GM12878 (cell line): ENCODE measurements at regions of chr19 and their contacts with region 1.

Region 1: DNA sequence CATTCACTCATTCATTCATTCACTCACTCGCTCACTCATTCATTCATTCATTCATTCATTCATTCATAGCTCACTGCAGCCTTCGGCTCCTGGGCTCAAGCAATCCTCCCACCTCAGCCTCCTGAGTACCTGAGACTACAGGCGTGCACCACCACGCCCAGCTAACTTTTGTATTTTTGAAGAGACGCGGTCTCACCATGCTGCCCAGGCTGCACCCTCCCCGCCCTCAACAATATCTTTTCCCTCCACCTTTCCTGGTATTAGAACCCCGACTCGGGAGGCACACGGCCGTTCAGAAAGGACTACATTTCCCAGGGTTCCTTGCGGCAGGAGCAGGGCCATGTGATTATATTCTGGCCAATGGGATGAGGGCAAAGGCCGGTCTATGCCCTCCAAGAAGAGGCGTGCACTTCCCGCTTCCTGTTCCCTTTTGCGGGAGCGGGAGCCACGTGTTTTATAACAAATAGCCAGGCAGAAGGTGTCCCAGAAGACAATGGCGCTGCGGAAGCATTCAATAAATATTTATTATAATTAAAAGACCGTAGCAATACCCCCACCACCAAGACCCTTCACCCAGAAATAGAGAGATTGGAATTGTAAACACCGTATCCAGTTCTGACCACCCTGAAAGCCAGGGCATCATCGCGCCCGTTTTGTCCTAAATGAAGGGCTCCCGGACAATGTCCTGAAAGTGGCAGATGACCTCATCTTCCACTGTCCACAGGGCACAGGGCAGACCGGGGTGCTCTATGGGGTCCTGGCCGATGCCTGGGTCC is 15.9 kb downstream of the TICAM1 start:
- DNase-seq: peak; percentile 48
- ATAC-seq: peak; percentile 82
- H3K4me3 ChIP-seq: no peak overlapping the region
- H3K27ac ChIP-seq: no peak overlapping the region
- H3K4me1 ChIP-seq: peaks cover 14% of the 10 kb centered on the region
- H3K27me3 ChIP-seq: no peaks in the 10 kb centered on the region
- CTCF ChIP-seq: no peak
- EP300 ChIP-seq: no peak
- POLR2A ChIP-seq: no peak; the same call in 1 of the 2 replicates
- RAD21 ChIP-seq: no peak

Region 2: GRCh38 chr19:4791170-4792018 is 24.2 kb before region 1 on chr19 and contains the start of gene FEM1A:
- CTCF ChIA-PET with region 1: interaction called, 17 read pairs
- POLR2A ChIA-PET with region 1: no interaction called
- RAD21 ChIA-PET with region 1: interaction called, 9 read pairs
- SMC1A ChIA-PET with region 1: interaction called, 15 read pairs
- in situ Hi-C with region 1: no loop called
- intact Hi-C with region 1: no loop called
- DNase-seq: peak; percentile 100
- ATAC-seq: peak; percentile 98
- H3K4me3 ChIP-seq: peak within 1 kb of the TSS; percentile 76
- H3K27ac ChIP-seq: peak within 1 kb of the TSS; percentile 93
- H3K4me1 ChIP-seq: peaks cover 22% of the 10 kb centered on the region
- H3K27me3 ChIP-seq: no peaks in the 10 kb centered on the region
- CTCF ChIP-seq: peak; percentile 98 to 99 (median 99); a peak in 5 of 6 replicates
- EP300 ChIP-seq: no peak
- POLR2A ChIP-seq: peak; percentile 89
- RAD21 ChIP-seq: peak; percentile 72
- polyA plus RNA-seq, gene FEM1A: 0.27 to 0.31 TPM

Region 3: GRCh38 chr19:4839186-4839585 is 23.6 kb after region 1 on chr19:
- CTCF ChIA-PET with region 1: interaction called, 30 read pairs
- POLR2A ChIA-PET with region 1: interaction called, 3 read pairs
- RAD21 ChIA-PET with region 1: interaction called, 4 read pairs
- SMC1A ChIA-PET with region 1: interaction called, 176 read pairs
- in situ Hi-C with region 1: no loop called
- intact Hi-C with region 1: no loop called
- DNase-seq: no peak
- ATAC-seq: no peak
- H3K4me3 ChIP-seq: no peak overlapping the region
- H3K27ac ChIP-seq: no peak overlapping the region
- H3K4me1 ChIP-seq: peaks cover 28% of the 10 kb centered on the region
- H3K27me3 ChIP-seq: no peaks in the 10 kb centered on the region
- CTCF ChIP-seq: no peak
- EP300 ChIP-seq: no peak
- POLR2A ChIP-seq: no peak
- RAD21 ChIP-seq: no peak

Region 4: GRCh38 chr19:4851551-4852290 is 36.1 kb after region 1 on chr19:
- CTCF ChIA-PET with region 1: interaction called, 346 read pairs
- POLR2A ChIA-PET with region 1: interaction called, 10 read pairs
- RAD21 ChIA-PET with region 1: interaction called, 158 read pairs
- SMC1A ChIA-PET with region 1: interaction called, 176 read pairs
- in situ Hi-C with region 1: no loop called
- intact Hi-C with region 1: no loop called
- DNase-seq: no peak
- ATAC-seq: peak; percentile 96
- H3K4me3 ChIP-seq: no peak overlapping the region
- H3K27ac ChIP-seq: no peak overlapping the region; the same call in 1 of the 2 replicates
- H3K4me1 ChIP-seq: peaks cover 28% of the 10 kb centered on the region
- H3K27me3 ChIP-seq: no peaks in the 10 kb centered on the region
- CTCF ChIP-seq: peak; percentile 88 to 92 (median 88)
- EP300 ChIP-seq: no peak
- POLR2A ChIP-seq: no peak; the same call in 1 of the 2 replicates
- RAD21 ChIP-seq: peak; percentile 84

Region 5: GRCh38 chr19:4909897-4910593 is 94.4 kb after region 1 on chr19:
- CTCF ChIA-PET with region 1: interaction called, 310 read pairs
- POLR2A ChIA-PET with region 1: interaction called, 8 read pairs
- RAD21 ChIA-PET with region 1: interaction called, 176 read pairs
- SMC1A ChIA-PET with region 1: interaction called, 94 read pairs
- in situ Hi-C with region 1: no loop called
- intact Hi-C with region 1: no loop called
- DNase-seq: peak; percentile 51
- ATAC-seq: peak; percentile 90
- H3K4me3 ChIP-seq: peak overlapping the region; percentile 99
- H3K27ac ChIP-seq: peak overlapping the region; percentile 78
- H3K4me1 ChIP-seq: peaks cover 29% of the 10 kb centered on the region
- H3K27me3 ChIP-seq: no peaks in the 10 kb centered on the region
- CTCF ChIP-seq: no peak
- EP300 ChIP-seq: no peak
- POLR2A ChIP-seq: peak; percentile 56; the same call in 1 of the 2 replicates
- RAD21 ChIP-seq: no peak

Region 6: DNA sequence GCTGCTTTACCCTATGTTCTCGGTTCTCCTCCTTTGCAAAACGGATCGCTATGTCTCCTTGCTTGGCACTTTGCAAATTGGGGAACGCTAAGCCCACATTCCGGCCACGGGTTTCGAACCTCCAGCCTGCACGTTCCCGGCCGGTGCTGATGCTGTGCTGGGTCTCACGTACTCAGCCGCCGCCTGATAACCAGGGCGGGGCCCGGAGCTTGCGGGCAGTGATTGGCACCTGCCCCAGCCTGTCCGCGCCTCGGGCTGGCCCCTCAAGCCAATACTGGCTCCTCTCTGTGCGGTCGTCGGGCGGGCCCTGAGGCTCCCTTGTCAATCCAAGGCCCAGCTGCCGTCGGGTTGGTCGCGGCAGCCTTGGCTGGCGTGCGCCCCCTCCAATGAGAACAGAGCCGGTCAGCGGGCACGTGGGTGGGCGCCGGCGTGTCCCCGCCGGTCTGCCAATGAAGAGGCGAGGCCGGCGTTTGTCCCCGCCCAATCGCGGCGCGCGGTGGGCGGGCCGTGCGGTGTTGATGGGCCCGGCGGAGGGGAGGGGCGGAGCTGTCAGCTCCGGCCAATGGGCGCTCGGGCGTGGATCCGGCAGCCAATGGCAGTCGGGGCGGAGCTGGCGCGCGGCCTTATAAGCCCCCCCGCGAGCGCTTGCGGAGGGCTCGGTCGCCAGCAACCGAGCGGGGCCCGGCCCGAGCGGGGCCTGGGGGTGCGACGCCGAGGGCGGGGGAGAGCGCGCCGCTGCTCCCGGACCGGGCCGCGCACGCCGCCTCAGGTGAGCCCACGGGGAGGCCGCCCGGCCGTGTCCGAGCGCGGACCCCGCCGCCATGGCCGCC is 153.1 kb after region 1 on chr19 and contains the start of gene KDM4B:
- CTCF ChIA-PET with region 1: interaction called, 15 read pairs
- POLR2A ChIA-PET with region 1: no interaction called
- RAD21 ChIA-PET with region 1: interaction called, 6 read pairs
- SMC1A ChIA-PET with region 1: no interaction called
- in situ Hi-C with region 1: no loop called
- intact Hi-C with region 1: no loop called
- DNase-seq: peak; percentile 96
- ATAC-seq: peak; percentile 97
- H3K4me3 ChIP-seq: peak within 1 kb of the TSS; percentile 95
- H3K27ac ChIP-seq: peak within 1 kb of the TSS; percentile 67
- H3K4me1 ChIP-seq: peaks cover 12% of the 10 kb centered on the region
- H3K27me3 ChIP-seq: no peaks in the 10 kb centered on the region
- CTCF ChIP-seq: no peak
- EP300 ChIP-seq: no peak
- POLR2A ChIP-seq: peak; percentile 98
- RAD21 ChIP-seq: no peak
- polyA plus RNA-seq, gene KDM4B: 0.47 to 1.8 TPM